ENCODE measurements at regions of chr1 and their contacts with region 1.

Region 1: GRCh38 chr1:212256369-212256768 is 28.8 kb upstream of the PPP2R5A start:
- DNase-seq: peak; percentile 35
- H3K4me3 Mint-ChIP-seq: no peak overlapping the region
- H3K27ac Mint-ChIP-seq: peak overlapping the region; percentile 34
- H3K4me1 Mint-ChIP-seq: peaks cover 59% of the 10 kb centered on the region
- H3K27me3 Mint-ChIP-seq: no peaks in the 10 kb centered on the region

Region 2: GRCh38 chr1:212218911-212219310 is 37.5 kb before region 1 on chr1:
- CTCF ChIA-PET with region 1: no interaction called
- intact Hi-C with region 1: loop called (anchors 1 kb)
- DNase-seq: peak; percentile 50
- H3K4me3 Mint-ChIP-seq: no peak overlapping the region
- H3K27ac Mint-ChIP-seq: peak overlapping the region; percentile 21
- H3K4me1 Mint-ChIP-seq: peaks cover 20% of the 10 kb centered on the region
- H3K27me3 Mint-ChIP-seq: no peaks in the 10 kb centered on the region

Region 3: GRCh38 chr1:212229654-212230053 is 26.7 kb before region 1 on chr1:
- CTCF ChIA-PET with region 1: no interaction called
- intact Hi-C with region 1: loop called (anchors 1 kb)
- DNase-seq: no peak
- H3K4me3 Mint-ChIP-seq: no peak overlapping the region
- H3K27ac Mint-ChIP-seq: no peak overlapping the region
- H3K4me1 Mint-ChIP-seq: peaks cover 23% of the 10 kb centered on the region
- H3K27me3 Mint-ChIP-seq: no peaks in the 10 kb centered on the region

Region 4: DNA sequence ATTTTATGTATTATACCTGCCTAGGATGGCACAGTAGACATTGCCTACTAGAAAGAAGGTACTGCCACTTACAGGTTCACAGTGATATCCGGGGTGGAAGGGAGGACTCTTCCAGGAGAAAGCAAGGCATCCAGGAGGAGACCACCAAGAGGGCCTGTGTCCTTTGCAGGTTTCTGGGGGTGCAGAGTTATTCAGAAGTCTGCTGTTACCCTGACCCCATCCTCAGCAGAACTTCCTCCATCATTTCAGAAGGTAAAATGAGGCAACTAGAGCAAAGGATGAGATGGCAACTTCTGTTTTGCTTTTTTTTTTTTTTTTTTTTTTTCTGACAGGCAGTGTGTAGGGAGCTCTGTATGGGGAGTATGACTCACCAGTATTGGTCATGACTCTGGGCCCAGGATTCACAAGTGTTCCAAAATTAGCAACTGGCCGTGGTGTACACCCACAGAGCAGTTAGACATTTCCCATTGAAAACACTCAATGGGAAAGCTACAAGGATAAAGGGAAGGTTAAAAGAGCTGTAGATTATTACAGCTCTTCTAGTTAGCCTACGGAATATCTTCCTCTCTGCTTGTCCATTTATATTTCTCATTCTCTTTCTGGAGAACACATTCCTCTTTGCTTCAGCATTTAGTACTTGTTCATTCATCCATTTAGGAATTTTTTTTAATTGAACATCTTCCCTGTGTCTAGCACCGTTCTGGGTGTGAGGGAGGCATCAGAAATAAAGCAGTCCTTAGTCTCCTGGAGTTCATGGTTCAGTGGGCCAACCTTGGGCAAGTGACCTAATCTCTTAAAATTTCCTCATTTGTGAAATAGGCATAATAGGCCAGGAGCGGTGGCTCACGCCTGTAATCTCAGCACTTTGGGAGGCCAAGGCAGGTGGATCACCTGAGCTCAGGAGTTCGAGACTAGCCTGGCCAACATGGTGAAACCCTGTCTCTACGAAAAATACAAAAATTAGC is 21.7 kb before region 1 on chr1:
- CTCF ChIA-PET with region 1: interaction called, 3 read pairs
- intact Hi-C with region 1: loop called (anchors 2 kb)
- DNase-seq: peak; percentile 60
- H3K4me3 Mint-ChIP-seq: no peak overlapping the region
- H3K27ac Mint-ChIP-seq: peak overlapping the region; percentile 19
- H3K4me1 Mint-ChIP-seq: peaks cover 14% of the 10 kb centered on the region
- H3K27me3 Mint-ChIP-seq: peaks cover 4% of the 10 kb centered on the region

Region 5: GRCh38 chr1:212267017-212267416 is 10.6 kb after region 1 on chr1:
- CTCF ChIA-PET with region 1: no interaction called
- intact Hi-C with region 1: no loop called
- DNase-seq: no peak
- H3K4me3 Mint-ChIP-seq: no peak overlapping the region
- H3K27ac Mint-ChIP-seq: no peak overlapping the region
- H3K4me1 Mint-ChIP-seq: no peaks in the 10 kb centered on the region
- H3K27me3 Mint-ChIP-seq: no peaks in the 10 kb centered on the region

Measured in activated naive CD4-positive, alpha-beta T cell treated with anti-CD3 and anti-CD28 coated beads for 36 hours (primary cell).